Prostate gland (tissue), 2 donors: ENCODE measurements at regions of chrX and their contacts with region 1.

Region 1: GRCh38 chrX:2614911-2615310 is 76.2 kb upstream of the CD99 start:
- DNase-seq: no peak
- H3K4me3 ChIP-seq: no peak overlapping the region
- H3K27ac ChIP-seq: no peak overlapping the region
- H3K4me1 ChIP-seq: no peaks in the 10 kb centered on the region
- H3K27me3 ChIP-seq: no peaks in the 10 kb centered on the region
- CTCF ChIP-seq: peak in 3 of 4 experiments; percentile 9 to 30 (median 11)
- POLR2A ChIP-seq: no peak

Region 2: DNA sequence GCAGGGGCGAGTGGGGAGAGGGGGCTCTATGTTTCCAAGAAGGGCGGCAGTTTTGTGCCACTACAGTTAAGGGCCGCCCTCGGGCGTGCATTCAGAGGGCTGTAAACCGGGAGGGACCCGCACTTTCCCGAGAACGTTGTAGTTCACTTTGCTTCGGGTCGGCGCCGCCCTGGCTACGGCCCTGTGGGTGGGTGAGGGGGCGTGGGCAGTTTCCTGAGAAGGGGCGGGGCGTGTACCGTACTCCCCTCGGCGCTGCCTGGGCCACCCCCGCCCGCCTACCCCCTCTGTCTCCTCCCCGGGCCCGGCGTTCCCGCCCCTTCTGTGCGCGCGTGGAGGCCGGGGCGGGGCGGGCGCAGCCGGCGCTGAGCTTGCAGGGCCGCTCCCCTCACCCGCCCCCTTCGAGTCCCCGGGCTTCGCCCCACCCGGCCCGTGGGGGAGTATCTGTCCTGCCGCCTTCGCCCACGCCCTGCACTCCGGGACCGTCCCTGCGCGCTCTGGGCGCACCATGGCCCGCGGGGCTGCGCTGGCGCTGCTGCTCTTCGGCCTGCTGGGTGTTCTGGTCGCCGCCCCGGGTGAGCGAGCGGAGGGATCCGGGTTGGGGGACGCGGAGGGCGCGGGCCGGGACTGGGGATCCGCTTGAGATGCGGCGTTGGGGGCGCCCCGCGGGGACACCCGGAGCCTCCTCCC is 76.1 kb after region 1 on chrX and contains the start of gene CD99:
- intact Hi-C with region 1: loop called (anchors 5 kb)
- DNase-seq: peak; percentile 88
- H3K4me3 ChIP-seq: peak within 1 kb of the TSS; percentile 69 to 91
- H3K27ac ChIP-seq: peak within 1 kb of the TSS; percentile 77 to 90
- H3K4me1 ChIP-seq: peaks cover 5% of the 10 kb centered on the region
- H3K27me3 ChIP-seq: no peaks in the 10 kb centered on the region
- CTCF ChIP-seq: no peak
- POLR2A ChIP-seq: peak; percentile 83
- total RNA-seq, gene CD99: 384 to 1,041 TPM

Region 3: GRCh38 chrX:3950373-3950772 is 1335.5 kb after region 1 on chrX:
- intact Hi-C with region 1: no loop called
- DNase-seq: no peak
- H3K4me3 ChIP-seq: no peak overlapping the region
- H3K27ac ChIP-seq: no peak overlapping the region
- H3K4me1 ChIP-seq: no peaks in the 10 kb centered on the region
- H3K27me3 ChIP-seq: no peaks in the 10 kb centered on the region
- CTCF ChIP-seq: no peak
- POLR2A ChIP-seq: no peak